Activated naive CD4-positive, alpha-beta T cell treated with anti-CD3 and anti-CD28 coated beads for 36 hours (primary cell): ENCODE measurements at regions of chr6 and their contacts with region 1.

Region 1: GRCh38 chr6:157861814-157862213 is 38.8 kb downstream of the SNX9 start:
- DNase-seq: no peak
- H3K4me3 Mint-ChIP-seq: no peak overlapping the region
- H3K27ac Mint-ChIP-seq: no peak overlapping the region
- H3K4me1 Mint-ChIP-seq: peaks cover 78% of the 10 kb centered on the region
- H3K27me3 Mint-ChIP-seq: no peaks in the 10 kb centered on the region

Region 2: GRCh38 chr6:157756708-157757429 is 104.9 kb before region 1 on chr6:
- CTCF ChIA-PET with region 1: interaction called, 12 read pairs
- intact Hi-C with region 1: loop called (anchors 1 kb)
- DNase-seq: peak; percentile 94
- H3K4me3 Mint-ChIP-seq: peak overlapping the region; percentile 28
- H3K27ac Mint-ChIP-seq: peak overlapping the region; percentile 89
- H3K4me1 Mint-ChIP-seq: peaks cover 93% of the 10 kb centered on the region
- H3K27me3 Mint-ChIP-seq: no peaks in the 10 kb centered on the region

Region 3: DNA sequence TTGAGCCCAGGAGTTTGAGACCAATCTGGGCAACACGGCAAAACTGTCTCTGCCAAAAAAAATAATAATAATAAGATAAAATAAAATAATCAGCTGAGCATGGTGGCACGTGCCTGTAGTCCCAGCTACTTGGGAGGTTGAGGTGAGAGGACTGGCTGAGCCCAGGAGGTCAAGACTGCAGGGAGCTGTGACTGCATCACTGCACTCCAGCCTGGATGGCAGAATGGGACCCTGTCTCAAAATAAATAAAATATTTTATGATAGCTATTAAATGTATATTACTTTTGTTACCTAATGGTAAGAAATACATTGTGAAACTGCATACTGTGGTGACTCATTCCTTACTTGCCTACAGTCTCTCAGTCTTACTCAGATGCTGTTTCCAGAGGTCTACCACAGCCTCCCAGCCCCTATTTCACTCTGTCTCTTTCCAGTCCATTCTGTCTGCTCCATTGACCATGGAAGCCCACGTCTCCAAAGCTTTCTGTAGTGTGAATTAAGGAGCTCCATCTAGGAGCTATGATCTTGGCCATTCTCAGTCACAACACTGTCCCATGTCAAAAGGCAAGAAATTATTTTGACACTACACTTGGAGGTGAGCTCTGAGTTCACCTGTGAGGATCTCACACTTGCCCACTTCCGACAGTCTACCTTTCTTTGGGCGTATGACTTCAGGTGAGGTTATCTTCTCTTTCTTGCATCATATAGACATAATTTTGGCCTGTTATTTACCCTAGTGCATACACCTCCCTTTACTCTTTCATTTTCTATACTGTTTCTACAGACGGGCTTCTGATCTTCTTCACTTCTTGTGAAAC is 61.2 kb before region 1 on chr6:
- CTCF ChIA-PET with region 1: no interaction called
- intact Hi-C with region 1: loop called (anchors 1 kb)
- DNase-seq: peak; percentile 69
- H3K4me3 Mint-ChIP-seq: peak overlapping the region; percentile 6
- H3K27ac Mint-ChIP-seq: peak overlapping the region; percentile 73
- H3K4me1 Mint-ChIP-seq: peaks cover 70% of the 10 kb centered on the region
- H3K27me3 Mint-ChIP-seq: no peaks in the 10 kb centered on the region

Region 4: DNA sequence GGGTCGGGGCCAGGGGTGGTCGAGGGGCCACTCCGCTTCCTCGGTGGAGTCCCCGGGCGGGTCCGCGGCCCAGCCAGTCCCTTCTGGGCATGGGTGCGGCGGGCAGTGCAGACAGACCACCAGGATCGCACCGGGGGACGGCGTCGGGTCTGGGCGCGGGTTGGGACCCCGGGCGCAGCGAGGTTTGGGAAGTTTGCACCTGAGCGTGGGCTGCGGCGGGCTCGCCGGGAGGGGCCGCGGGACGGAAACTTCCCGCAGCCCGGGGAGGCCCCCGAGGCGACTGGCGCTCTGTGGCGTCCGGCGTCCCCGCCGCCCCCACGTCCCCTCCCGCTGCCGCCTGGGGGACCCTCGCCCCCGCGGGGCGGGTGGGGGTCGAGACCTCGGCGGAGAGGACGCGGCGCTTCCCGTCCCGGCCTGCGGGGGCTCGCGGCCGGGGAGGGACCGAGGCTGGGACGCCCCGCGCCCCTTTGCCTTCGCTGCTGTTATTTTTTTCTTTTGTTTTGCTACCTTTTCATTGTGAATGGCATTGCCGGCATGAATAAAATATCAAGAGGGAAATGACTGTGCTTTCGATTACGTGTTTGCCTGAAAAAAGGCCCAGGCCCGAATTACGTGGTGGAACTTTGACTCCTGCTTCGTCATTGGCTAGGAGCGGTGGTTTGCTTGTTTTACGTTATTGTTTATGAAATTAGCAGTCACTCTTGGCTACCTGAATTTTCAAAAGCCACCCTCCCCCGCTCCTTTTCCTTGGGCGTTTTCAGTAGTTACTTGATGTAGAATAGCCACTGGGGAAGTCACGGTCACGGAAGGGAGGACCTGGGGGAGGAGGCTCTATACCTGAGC is 38.1 kb before region 1 on chr6:
- CTCF ChIA-PET with region 1: interaction called, 3 read pairs
- intact Hi-C with region 1: loop called (anchors 1 kb)
- DNase-seq: peak; percentile 96
- H3K4me3 Mint-ChIP-seq: peak overlapping the region; percentile 80
- H3K27ac Mint-ChIP-seq: peak overlapping the region; percentile 96
- H3K4me1 Mint-ChIP-seq: peaks cover 42% of the 10 kb centered on the region
- H3K27me3 Mint-ChIP-seq: peaks cover 4% of the 10 kb centered on the region

Region 5: GRCh38 chr6:157841211-157841840 is 20.5 kb before region 1 on chr6:
- CTCF ChIA-PET with region 1: interaction called, 5 read pairs
- intact Hi-C with region 1: loop called (anchors 1 kb)
- DNase-seq: peak; percentile 36
- H3K4me3 Mint-ChIP-seq: no peak overlapping the region
- H3K27ac Mint-ChIP-seq: peak overlapping the region; percentile 59
- H3K4me1 Mint-ChIP-seq: peaks cover 84% of the 10 kb centered on the region
- H3K27me3 Mint-ChIP-seq: no peaks in the 10 kb centered on the region

Region 6: DNA sequence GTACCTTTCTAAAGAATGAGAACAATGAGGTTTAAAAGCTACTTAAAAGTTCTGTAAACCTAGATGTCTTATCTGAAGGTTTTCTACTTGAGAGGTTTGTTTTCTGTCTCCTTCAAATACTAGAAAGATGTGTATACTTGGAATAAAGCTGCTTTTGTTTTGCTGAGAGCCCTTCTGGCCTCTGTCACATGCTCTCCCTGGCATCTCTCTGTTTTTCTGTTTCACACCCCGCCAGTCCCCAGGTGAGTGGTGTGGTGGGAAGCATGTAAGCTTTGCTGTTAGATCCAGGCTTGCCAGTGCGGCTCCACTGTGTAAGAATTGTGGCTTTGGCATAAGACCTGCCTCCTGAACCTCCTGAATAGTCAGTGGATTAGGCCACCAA is 18.1 kb after region 1 on chr6:
- CTCF ChIA-PET with region 1: interaction called, 4 read pairs
- intact Hi-C with region 1: loop called (anchors 2 kb)
- DNase-seq: peak; percentile 55
- H3K4me3 Mint-ChIP-seq: no peak overlapping the region
- H3K27ac Mint-ChIP-seq: peak overlapping the region; percentile 78
- H3K4me1 Mint-ChIP-seq: peaks cover 87% of the 10 kb centered on the region
- H3K27me3 Mint-ChIP-seq: no peaks in the 10 kb centered on the region

Region 7: DNA sequence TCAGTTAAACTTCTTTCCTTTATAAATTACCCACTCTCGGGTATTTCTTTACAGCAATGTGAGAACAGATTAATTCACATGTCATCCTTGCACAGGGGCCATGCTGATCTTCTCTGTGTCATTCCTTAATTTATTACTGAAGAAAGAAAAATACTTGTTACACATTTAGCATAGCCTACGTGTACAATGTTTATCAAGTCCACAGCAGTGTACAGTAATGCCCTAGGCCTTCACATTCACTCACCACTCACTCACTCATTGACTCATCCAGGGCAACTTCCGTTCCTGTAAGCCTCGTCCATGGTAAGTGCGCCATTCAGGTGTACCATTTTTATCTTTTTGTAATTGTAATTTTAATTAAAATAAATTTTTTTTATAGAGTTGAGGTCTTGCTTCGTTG is 1064.6 kb after region 1 on chr6:
- CTCF ChIA-PET with region 1: no interaction called
- intact Hi-C with region 1: no loop called
- DNase-seq: no peak
- H3K4me3 Mint-ChIP-seq: no peak overlapping the region
- H3K27ac Mint-ChIP-seq: no peak overlapping the region
- H3K4me1 Mint-ChIP-seq: no peaks in the 10 kb centered on the region
- H3K27me3 Mint-ChIP-seq: no peaks in the 10 kb centered on the region